ENCODE measurements at regions of chr6 and their contacts with region 1.

Region 1: GRCh38 chr6:143940011-143940597 is 68.0 kb downstream of the PLAGL1 start:
- DNase-seq: no peak

Region 2: DNA sequence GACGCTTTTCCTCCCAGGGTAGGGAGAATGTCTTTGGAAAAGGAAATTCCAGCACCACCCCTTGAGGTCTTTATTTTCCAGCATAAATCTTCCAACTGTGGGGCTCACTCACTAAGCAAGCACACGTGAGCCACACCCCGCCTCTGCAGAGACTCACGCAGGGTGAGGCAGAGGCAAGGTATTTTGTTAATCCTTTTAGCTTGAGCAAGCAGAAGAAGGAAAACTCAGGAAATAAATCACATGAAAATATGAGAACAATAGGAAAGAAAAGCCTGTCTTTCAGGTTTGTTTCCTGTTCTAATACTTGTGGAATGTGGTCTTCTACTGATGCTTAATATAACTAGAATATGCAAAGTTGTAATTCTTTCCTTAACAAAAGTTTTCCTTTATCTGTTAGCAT is 266.4 kb before region 1 on chr6:
- intact Hi-C with region 1: no loop called
- DNase-seq: no peak

Region 3: DNA sequence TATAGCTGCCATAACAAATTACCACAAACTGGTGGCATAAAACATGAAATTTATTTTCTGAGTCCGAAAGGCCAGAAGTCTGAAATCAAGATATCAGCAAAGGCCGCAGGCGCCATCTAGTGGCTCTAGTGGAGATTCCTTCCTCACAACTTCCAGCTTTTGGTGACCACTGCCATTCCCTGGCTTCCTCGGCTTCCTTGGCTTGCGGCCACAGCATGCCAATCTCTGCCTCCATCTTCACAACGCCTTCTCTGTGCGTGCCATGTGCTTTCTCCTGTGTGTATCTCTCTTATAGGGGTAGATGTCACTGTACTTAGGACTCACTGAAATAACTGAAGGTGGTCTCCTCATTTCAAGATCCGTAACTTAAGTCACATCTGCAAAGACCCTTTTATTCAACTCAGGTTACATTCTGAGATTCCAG is 73.4 kb after region 1 on chr6:
- intact Hi-C with region 1: loop called in 1 of 2 experiments (anchors 5 kb)
- DNase-seq: peak; percentile 93

Region 4: DNA sequence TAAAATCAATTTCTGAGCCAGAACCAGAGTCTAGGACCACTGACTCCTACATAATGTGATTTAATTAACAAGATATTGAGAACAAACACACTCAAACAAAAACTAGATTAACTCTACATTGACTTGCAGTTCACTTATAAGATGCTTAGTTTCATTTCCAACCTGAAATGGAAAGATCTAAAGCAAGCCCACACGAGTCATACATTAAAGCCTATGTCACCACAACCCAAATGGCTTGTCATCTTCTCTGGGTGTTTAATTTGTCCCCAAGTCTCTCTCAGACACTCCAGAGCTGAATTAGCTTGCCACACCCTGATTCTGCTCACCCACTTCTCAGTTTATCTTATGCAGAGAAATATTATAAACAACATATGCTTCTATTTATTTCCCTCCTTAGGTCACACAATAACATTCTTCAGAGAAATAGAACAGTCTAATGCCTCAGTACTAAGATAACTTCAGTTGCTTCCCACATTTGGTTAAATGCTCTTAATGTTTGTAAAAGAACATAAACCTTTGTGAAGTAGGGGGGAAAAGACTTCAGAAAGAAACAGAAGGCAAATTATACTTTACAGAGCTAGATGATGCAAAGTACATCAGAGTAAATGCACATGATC is 1883.3 kb after region 1 on chr6:
- intact Hi-C with region 1: loop called in 1 of 2 experiments (anchors 10 kb)
- DNase-seq: no peak

Measured in posterior vena cava (tissue), 2 donors.